ENCODE measurements at regions of chr1 and their contacts with region 1.

Region 1: DNA sequence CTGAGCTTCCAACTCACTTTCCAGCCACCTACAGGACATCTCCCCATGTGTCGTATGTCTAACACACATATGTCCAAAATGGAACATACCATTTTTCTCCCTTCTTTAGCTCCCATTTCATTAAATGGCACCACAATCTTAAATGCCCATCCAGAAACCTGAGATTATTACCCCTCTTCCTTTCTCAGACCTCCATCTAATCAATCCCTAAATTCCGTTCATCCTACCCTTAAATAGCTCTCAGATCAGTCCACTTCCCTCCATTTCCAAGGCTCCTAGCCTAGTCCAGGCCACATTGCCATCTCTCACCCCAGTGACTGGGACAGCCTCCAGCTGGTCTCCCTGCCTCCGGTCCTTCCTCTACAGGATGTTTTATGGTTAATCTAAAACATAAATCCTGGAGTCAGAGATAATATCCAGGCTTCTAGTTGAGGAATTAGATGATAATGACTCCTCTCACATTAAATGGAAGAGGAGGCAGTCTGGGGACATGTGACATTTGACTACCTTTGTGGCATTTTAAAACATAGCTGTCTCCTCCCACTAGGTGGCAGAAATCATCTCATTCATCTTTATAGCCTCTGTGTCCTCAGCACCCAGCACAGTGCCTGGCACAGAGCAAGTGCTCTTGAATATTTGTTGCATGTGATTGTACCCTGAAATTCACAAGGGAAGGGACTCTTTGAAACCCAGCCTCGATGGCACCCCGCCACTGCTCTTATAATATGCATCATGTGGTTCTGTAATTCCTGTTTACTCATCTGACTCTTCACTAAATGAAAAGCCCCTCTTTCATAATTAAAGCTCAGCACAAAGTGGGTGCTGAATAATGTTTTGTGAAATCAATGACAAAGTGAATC is 102.3 kb downstream of the TMEM53 start:
- H3K4me3 ChIP-seq: no peak overlapping the region
- H3K27ac ChIP-seq: no peak overlapping the region
- H3K4me1 ChIP-seq: no peaks in the 10 kb centered on the region
- CTCF ChIP-seq: peak; percentile 37; the same call in 1 of the 2 replicates

Region 2: GRCh38 chr1:44553771-44554170 is 18.2 kb before region 1 on chr1:
- CTCF ChIA-PET with region 1: interaction called, 14 read pairs
- POLR2A ChIA-PET with region 1: no interaction called
- H3K4me3 ChIP-seq: no peak overlapping the region
- H3K27ac ChIP-seq: no peak overlapping the region
- H3K4me1 ChIP-seq: no peaks in the 10 kb centered on the region
- CTCF ChIP-seq: no peak

Region 3: DNA sequence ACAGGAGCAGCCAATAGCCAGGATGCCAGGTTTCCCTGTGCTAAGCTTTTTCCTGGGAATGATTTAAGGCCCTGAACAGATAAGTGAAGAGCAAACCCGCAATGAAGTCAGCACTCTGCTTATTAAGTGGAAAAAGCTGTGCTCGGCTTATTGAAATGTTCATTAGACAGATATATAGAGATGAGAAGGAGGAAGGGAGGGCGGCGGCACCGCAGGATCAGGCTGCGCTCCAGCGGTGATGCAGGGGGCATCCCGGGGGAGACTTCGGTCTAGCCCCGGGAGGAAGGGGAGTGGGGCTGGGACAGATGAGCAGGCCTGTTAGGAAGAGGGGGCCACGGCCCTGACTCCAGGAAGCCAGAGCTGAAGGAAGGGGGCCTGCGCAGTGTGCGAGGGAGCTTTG is 12.6 kb before region 1 on chr1:
- CTCF ChIA-PET with region 1: interaction called, 14 read pairs
- POLR2A ChIA-PET with region 1: no interaction called
- H3K4me3 ChIP-seq: no peak overlapping the region
- H3K27ac ChIP-seq: no peak overlapping the region
- H3K4me1 ChIP-seq: no peaks in the 10 kb centered on the region
- CTCF ChIP-seq: no peak